SK-N-SH (cell line): ENCODE measurements at regions of chr7 and their contacts with region 1.

Region 1: DNA sequence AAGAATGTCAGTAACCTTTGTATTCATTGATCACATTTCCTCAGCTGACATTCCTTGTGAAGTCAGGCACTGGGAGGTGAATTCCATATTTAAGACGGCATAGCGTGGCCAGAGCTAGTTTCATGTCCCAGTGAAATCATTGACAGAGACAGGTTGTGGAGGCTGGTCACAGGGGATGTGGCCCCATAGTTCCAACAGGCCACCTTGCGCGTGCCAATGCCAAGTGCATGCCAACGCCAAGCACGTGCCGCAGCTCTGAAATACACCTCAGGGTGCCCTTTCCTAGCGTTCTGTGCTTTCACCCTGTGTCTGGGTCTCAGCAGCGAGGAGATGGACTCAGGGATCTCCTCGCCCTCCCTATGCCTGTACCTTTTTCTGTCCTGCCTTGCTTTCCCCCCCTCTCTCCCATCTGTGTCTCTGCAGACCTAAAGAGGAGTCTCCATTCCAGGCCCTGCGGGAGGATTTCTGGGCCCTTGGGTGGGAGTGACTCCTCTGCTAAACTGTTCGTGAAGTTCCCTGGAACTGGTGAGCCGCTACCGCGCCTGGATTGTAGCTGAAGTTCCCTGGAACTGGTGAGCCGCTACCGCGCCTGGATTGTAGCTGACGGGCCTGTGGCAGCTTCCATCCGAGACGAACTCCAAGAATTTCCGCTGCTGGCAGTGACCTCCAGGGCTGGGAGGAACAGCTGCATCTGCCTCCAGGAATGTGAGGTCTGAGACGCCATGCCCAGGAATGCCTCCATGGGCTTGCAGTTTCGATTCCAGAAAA is 19.7 kb downstream of the AQP1 start:
- DNase-seq: peak; percentile 22
- H3K4me3 ChIP-seq: no peak overlapping the region
- H3K27ac ChIP-seq: peak overlapping the region in 1 of 2 experiments; percentile 1; a peak in 1 of 4 replicates
- H3K4me1 ChIP-seq: peaks cover 0 to 28% of the 10 kb centered on the region in 2 experiments; a peak in 1 of 4 replicates
- H3K27me3 ChIP-seq: no peaks in the 10 kb centered on the region
- CTCF ChIP-seq: no peak
- EP300 ChIP-seq: no peak
- RAD21 ChIP-seq: no peak

Region 2: DNA sequence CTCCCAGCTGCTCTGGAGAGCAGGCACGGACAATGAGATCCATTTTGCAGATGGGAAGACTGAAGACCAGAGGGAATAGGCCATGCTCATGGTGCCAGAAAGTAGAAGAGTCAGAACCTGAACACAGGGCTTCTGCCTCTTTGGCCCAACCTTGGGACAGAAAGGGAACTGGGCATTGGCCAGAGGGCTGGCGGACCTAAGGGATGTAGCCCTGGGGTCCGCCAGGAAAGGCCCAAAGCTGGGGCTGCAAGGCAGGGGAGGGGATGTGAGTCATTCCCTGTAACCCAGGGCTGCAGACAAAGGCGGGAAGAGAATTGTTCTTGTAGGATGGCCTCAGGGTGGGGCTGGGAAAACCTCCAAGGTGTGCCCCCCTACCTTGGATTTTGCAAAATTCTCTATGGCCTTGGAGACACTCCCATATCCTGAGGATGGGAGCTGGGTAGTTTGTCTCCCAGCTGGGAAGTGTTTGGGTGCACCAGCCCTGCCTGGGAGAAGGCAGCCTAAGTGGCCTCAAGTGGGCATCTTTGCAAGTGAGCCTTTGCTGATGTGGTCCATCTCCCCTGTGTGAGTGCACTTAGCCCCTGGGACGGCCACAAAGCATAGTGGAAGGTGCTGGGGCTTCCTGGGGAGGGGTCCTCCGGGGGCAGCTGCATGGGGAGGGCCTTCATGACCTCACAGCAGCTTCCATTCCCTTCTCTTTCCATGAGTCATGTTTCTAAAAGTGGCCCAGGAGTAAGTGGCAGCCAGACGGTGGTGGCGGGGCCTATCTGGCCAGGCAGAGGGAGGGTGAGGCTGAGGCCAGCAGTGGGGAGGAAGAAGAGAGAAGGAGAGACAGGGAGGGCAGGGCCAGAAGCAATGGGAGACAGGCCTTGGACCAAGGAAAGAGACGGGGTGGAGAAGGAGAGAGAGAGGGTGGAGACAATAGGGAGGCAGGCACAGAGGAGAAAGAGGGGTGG is 10.5 kb before region 1 on chr7:
- CTCF ChIA-PET with region 1: interaction called, 18 read pairs
- POLR2A ChIA-PET with region 1: no interaction called
- DNase-seq: peak; percentile 14
- H3K4me3 ChIP-seq: no peak overlapping the region
- H3K27ac ChIP-seq: peak overlapping the region in 1 of 2 experiments; percentile 48; a peak in 2 of 4 replicates
- H3K4me1 ChIP-seq: peaks cover 20 to 34% of the 10 kb centered on the region in 2 experiments; a peak in 3 of 4 replicates
- H3K27me3 ChIP-seq: no peaks in the 10 kb centered on the region
- CTCF ChIP-seq: no peak
- EP300 ChIP-seq: no peak
- RAD21 ChIP-seq: no peak